Dorsolateral prefrontal cortex (tissue), 120 donors: ENCODE measurements at regions of chr11 and their contacts with region 1.

Region 1: DNA sequence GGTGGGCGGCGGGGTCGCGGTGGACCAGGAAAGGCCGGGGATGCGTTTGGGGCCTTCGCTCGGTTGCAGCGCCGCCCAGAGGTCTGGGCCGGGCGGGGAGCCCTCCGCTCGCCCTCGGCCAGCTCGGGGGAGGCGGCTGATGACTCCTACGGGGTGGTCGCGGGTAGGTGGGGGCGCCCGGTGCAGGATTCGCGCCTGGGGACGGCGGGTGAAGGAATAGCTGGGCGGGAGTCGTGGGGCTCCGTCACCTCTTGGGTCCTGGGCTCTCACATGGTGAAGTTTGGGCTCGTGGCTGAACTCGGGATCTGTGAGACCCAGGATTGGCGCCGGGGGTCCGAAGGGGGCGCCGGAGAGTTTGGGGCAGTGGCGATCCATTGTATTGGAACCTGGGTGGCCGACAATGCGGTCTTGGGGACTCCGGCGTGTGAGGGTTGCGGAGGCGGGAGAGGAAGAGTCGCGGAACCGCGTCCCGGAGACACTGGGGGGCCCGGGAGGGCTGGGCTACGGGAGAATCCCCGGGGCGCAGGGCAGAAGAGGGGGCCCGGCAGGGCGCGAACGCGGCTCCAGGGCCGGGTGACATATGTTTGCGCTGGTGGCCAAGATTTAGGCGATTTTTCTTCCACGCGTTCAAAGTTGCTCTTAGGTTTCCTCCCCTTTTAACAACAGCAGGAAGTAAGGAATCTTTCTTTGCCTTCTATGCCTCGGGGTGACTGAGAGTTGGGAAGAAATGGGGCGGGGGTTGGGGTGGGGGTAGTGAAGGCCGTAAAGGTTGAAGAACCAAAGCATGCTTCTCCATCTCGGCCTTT is 935 bp downstream of the QSER1 start:
- DNase-seq: peak in 8 of 10 donors; percentile 28 to 72 (median 42)
- H3K4me3 ChIP-seq: peak overlapping the region; percentile 60 to 96 (median 90)
- H3K27ac ChIP-seq: peak overlapping the region in 57 of 59 donors; percentile 32 to 98 (median 88)
- H3K27me3 ChIP-seq: no peaks in the 10 kb centered on the region
- CTCF ChIP-seq: peak in 54 of 56 donors; percentile 17 to 69 (median 50)

Region 2: GRCh38 chr11:32529994-32530588 is 363.5 kb before region 1 on chr11:
- intact Hi-C with region 1: no loop called
- DNase-seq: no peak
- H3K4me3 ChIP-seq: no peak overlapping the region
- H3K27ac ChIP-seq: no peak overlapping the region
- H3K27me3 ChIP-seq: peaks cover 0 to 8% (median 0%) of the 10 kb centered on the region in 45 donors
- CTCF ChIP-seq: no peak

Region 3: DNA sequence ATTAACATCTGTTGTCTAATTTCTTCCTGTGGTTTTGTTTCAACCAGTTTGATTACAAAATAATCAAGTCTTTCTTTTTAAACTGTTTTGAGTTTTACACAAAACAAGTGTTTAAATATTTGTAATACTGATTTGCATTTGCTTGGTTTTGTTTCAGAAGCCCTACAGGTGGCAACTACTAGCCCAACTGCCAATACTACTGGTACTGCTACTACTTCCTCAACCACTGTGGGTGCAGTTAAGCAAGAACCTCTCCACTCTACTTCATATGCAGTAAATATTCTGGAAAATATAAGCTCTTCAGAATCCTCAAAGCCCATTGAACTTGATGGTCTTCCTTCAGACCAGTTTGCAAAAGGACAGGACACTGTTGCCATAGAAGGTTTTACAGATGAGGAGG is 60.2 kb after region 1 on chr11:
- intact Hi-C with region 1: loop called in 1 of 2 experiments (anchors 10 kb)
- DNase-seq: no peak
- H3K4me3 ChIP-seq: no peak overlapping the region
- H3K27ac ChIP-seq: no peak overlapping the region
- H3K27me3 ChIP-seq: no peaks in the 10 kb centered on the region
- CTCF ChIP-seq: no peak

Region 4: DNA sequence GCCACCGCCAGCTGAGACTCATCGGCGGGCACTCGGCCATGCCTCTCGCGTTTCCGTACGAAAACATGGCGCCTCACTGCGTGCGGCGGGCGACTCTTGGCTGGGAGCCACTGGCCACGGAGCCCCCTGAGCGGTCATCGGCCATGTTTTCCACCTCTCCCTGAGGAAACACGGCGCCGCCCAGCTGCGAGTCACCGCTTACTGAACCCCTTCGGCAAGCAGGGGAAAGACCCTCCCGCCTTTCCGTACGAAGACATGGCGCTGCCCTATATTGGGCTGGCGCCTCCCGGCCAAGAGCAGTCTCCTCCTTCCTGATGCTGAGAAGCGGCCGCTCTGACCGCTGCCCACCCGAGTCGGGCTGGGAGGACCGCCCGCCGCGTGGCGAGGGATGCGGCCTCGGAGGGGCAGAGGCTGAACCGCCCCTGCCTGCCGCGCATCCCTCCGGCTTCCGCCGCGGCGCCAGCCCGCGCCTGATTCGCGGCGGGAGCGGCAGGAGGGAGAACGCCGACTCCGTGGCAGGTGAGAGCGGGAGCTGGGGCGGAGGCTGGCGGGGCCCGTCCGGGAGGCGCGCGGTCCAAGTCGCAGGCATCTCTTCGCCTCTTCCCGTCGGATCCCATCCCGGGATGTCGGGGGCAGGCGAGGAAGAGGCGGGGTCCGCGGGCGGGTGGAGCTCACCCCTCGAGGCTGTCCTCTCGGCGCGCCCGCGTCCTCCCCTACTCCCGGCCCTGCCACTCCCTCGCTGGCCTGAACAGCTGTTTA is 145.9 kb after region 1 on chr11 and contains the start of gene TCP11L1:
- intact Hi-C with region 1: loop called (anchors 2 to 5 kb)
- DNase-seq: peak; percentile 62 to 96 (median 93)
- H3K4me3 ChIP-seq: peak within 1 kb of the TSS; percentile 50 to 95 (median 87)
- H3K27ac ChIP-seq: peak within 1 kb of the TSS; percentile 85 to 100 (median 98)
- H3K27me3 ChIP-seq: no peaks in the 10 kb centered on the region
- CTCF ChIP-seq: peak in 43 of 56 donors; percentile 4 to 63 (median 35)
- total RNA-seq, gene TCP11L1: 37.5 to 87.1 (median 67.2) TPM